Activated T-helper 1 cell treated with anti-CD3 and anti-CD28 coated beads, Interleukin-12 subunit alpha, Interleukin-12 subunit beta, Interleukin-2, Interleukin-4 antibody, amounts not matched to agents 30 ng/mL and 10 ng/mL and 1 ng/mL, durations not matched to agents 14 hours and 24 hours and 36 hours (primary cell): ENCODE measurements at regions of chr11 and their contacts with region 1.

Region 1: GRCh38 chr11:123301696-123302400 is 106.8 kb upstream of the CLMP start:
- DNase-seq: peak; percentile 72
- H3K4me3 Mint-ChIP-seq: peak overlapping the region; percentile 79
- H3K27ac Mint-ChIP-seq: peak overlapping the region; percentile 92
- H3K4me1 Mint-ChIP-seq: peaks cover 52% of the 10 kb centered on the region
- H3K27me3 Mint-ChIP-seq: peaks cover 3% of the 10 kb centered on the region

Region 2: GRCh38 chr11:123137431-123138224 is 164.2 kb before region 1 on chr11:
- intact Hi-C with region 1: no loop called
- DNase-seq: no peak
- H3K4me3 Mint-ChIP-seq: no peak overlapping the region
- H3K27ac Mint-ChIP-seq: no peak overlapping the region
- H3K4me1 Mint-ChIP-seq: no peaks in the 10 kb centered on the region
- H3K27me3 Mint-ChIP-seq: peaks cover 4% of the 10 kb centered on the region

Region 3: DNA sequence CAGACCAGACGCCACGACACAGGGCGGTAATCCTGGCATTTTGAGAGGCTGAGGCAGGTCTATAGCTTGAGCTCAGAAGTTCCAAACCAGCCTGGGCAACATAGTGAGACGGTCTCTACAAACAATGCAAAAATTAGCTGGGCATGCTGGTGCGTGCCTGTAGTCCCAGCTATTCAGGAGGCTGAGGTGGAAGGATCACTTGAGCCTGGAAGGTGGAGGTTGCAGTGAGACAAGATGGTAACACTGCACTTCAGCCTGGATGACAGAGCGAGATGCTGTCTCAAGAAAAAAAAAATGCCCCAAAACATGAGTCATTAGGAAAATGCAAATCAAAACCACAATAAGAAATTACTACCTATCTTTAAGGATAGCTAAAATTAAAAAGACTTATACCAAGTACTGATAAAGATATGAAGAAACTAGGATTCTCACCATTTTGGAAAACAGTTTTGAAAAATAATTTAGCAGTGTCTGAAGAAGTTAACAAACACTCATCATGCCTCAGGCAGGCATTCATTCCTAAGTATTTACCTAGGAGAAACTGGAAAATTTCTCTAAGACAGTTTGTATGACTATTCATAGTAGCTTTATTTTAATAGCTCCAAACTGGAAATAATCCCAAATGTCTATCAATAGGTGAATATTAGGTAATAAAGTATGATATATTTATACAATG is 36.6 kb after region 1 on chr11:
- intact Hi-C with region 1: loop called (anchors 2 kb)
- DNase-seq: no peak
- H3K4me3 Mint-ChIP-seq: no peak overlapping the region
- H3K27ac Mint-ChIP-seq: no peak overlapping the region
- H3K4me1 Mint-ChIP-seq: peaks cover 12% of the 10 kb centered on the region
- H3K27me3 Mint-ChIP-seq: peaks cover 9% of the 10 kb centered on the region

Region 4: DNA sequence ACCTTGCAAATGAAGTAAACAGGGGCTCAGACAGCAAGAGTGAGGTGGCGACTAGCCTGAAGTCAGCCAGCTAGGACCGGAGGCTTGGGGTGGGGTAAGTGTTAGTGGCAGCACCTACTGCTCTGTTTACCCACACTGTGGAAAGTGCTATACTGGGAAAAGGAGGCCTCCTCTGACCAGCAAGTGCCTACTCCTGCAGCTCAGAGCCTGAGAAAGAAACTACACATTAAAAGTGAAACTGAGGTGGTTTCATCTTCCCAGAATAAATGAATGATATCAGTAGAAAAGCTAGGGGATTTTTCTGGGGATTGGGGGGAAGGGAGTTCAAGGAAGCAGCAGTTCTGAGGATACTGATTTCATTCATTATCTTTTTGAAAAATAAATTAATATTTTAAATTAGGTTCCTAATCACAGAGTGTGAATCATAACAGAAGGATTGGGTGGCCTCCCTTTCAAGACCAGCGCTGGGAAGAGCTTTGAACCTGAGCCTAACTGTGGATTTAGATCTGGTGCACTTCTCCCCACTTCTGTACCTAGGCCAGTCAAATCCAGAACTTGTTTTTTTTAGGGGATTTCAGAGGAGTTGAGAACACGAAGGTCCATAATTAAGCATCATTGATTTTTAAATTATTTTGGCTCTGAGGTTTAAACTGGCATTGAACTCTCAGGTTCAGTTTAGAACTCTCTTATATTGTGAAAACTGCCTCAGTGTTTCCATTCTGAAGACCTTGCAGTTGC is 80.1 kb after region 1 on chr11:
- intact Hi-C with region 1: loop called (anchors 1 kb)
- DNase-seq: peak; percentile 70
- H3K4me3 Mint-ChIP-seq: peak overlapping the region; percentile 62
- H3K27ac Mint-ChIP-seq: peak overlapping the region; percentile 79
- H3K4me1 Mint-ChIP-seq: peaks cover 49% of the 10 kb centered on the region
- H3K27me3 Mint-ChIP-seq: no peaks in the 10 kb centered on the region

Region 5: GRCh38 chr11:123429913-123430720 is 128.3 kb after region 1 on chr11 and contains the start of gene GRAMD1B:
- intact Hi-C with region 1: loop called (anchors 1 kb)
- DNase-seq: peak; percentile 78
- H3K4me3 Mint-ChIP-seq: peak within 1 kb of the TSS; percentile 91
- H3K27ac Mint-ChIP-seq: peak within 1 kb of the TSS; percentile 93
- H3K4me1 Mint-ChIP-seq: peaks cover 76% of the 10 kb centered on the region
- H3K27me3 Mint-ChIP-seq: no peaks in the 10 kb centered on the region
- total RNA-seq, gene GRAMD1B: 154 and 155 TPM in 2 replicates

Region 6: GRCh38 chr11:123478352-123478987 is 176.6 kb after region 1 on chr11:
- intact Hi-C with region 1: loop called (anchors 1 kb)
- DNase-seq: peak; percentile 9
- H3K4me3 Mint-ChIP-seq: peak overlapping the region; percentile 32
- H3K27ac Mint-ChIP-seq: peak overlapping the region; percentile 70
- H3K4me1 Mint-ChIP-seq: peaks cover 78% of the 10 kb centered on the region
- H3K27me3 Mint-ChIP-seq: no peaks in the 10 kb centered on the region

Region 7: GRCh38 chr11:123580557-123581275 is 278.9 kb after region 1 on chr11:
- intact Hi-C with region 1: loop called (anchors 5 kb)
- DNase-seq: peak; percentile 57
- H3K4me3 Mint-ChIP-seq: no peak overlapping the region
- H3K27ac Mint-ChIP-seq: peak overlapping the region; percentile 29
- H3K4me1 Mint-ChIP-seq: peaks cover 23% of the 10 kb centered on the region
- H3K27me3 Mint-ChIP-seq: no peaks in the 10 kb centered on the region